GM10248 (cell line): ENCODE measurements at regions of chr17 and their contacts with region 1.

Region 1: DNA sequence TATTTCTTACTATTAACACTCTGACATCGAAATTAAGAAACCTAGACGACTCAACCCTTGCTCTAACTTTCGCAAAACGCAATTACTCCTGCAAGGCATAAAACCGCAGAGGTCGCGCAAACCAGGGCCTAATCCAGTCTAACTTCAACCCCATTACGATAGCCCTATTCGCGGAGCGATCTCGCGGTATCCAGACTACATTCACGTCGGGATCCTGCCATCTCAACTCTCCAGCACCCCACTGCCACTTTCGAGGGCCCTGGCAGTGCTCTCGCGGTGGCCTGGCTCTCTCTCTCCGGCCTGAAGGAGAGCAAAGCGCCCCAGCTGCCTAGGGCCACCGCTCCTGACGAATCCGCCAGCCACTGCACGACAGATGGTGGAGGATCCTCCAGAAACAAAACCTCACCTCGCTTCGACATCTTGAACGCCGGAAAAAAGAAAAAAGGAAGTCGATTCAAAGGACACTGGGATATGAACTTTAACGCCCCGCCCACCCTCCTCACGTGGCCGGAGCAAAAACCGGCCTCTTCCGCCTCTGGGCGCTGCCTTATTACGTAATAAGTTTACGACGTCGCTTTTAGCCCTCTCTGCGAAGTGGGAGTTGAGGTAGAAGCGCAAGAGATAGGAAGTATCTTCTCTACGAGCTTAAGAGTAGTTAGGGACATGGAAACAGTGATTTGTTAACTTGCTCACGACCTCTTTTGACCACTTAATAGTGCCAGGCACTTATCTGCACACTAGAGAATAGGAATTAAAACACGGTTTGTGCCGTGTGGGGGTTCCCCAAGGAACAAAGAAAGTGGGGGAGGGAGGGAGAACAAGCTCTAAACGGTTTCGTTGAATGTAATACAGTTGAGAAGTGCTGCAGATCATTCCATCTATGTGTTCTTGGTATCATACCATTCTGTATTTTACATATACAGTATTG is at the start of gene RPL23:
- DNase-seq: peak; percentile 93
- CTCF ChIP-seq: no peak

Region 2: DNA sequence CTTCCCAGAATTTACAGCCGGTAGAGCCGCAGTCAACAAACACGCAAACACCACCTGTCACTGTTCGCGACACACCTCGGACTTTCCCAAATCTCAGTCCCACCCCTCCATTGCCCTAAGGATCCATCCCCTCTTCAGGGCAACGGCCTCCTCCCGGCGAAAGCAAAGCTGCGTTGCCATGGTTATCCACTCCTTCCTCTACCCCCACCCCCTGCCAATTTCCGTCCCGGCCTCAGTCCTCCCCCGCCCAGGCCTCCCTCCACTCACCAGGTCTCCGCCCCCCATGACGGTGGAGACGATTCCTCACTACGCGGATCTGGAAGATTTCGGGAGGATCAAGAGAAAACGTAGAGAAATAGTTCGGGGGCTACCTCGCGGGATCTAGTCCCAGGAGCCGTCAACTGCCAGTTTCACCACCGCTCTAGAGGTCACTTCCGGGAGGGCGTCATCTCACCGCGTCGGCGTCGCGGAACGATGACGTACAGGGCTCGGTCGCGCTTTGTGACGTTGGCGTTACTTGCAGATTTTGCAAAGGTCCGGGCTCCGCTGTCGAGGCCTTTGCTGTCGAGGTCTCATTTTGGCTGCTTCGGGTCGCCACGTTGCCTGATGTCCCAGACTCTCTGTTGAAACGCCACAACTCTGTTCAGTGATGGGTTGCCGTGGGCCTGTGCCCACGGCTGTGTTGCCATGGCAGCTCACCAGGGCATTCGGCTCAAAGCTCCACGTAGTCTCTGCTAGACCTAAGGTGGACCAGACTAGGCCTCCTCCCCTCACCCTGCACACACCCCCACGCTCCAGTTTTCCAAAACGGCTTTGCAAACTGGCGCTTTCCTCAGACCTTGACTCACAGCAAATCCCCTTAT is 28.4 kb before region 1 on chr17 and contains the start of gene CWC25:
- CTCF ChIA-PET with region 1: interaction called, 3 read pairs
- POLR2A ChIA-PET with region 1: interaction called, 10 read pairs
- DNase-seq: peak; percentile 95
- CTCF ChIP-seq: no peak

Region 3: GRCh38 chr17:38879878-38880682 is 26.5 kb after region 1 on chr17:
- CTCF ChIA-PET with region 1: no interaction called
- POLR2A ChIA-PET with region 1: no interaction called
- DNase-seq: no peak
- CTCF ChIP-seq: no peak